Activated CD4-positive, alpha-beta T cell treated with anti-CD3 and anti-CD28 coated beads for 36 hours (primary cell): ENCODE measurements at regions of chr1 and their contacts with region 1.

Region 1: GRCh38 chr1:20493839-20494608 is 8.0 kb upstream of the CAMK2N1 start:
- DNase-seq: peak; percentile 88
- ATAC-seq: peak; percentile 31
- H3K4me3 Mint-ChIP-seq: no peak overlapping the region
- H3K27ac Mint-ChIP-seq: no peak overlapping the region
- H3K4me1 Mint-ChIP-seq: no peaks in the 10 kb centered on the region
- H3K27me3 Mint-ChIP-seq: peaks cover 10% of the 10 kb centered on the region

Region 2: GRCh38 chr1:20100632-20101355 is 393.2 kb before region 1 on chr1:
- CTCF ChIA-PET with region 1: no interaction called
- POLR2A ChIA-PET with region 1: no interaction called
- intact Hi-C with region 1: loop called in 1 of 2 experiments (anchors 2 kb)
- DNase-seq: peak; percentile 59
- ATAC-seq: peak; percentile 75
- H3K4me3 Mint-ChIP-seq: no peak overlapping the region
- H3K27ac Mint-ChIP-seq: no peak overlapping the region
- H3K4me1 Mint-ChIP-seq: peaks cover 5% of the 10 kb centered on the region
- H3K27me3 Mint-ChIP-seq: peaks cover 2% of the 10 kb centered on the region

Region 3: DNA sequence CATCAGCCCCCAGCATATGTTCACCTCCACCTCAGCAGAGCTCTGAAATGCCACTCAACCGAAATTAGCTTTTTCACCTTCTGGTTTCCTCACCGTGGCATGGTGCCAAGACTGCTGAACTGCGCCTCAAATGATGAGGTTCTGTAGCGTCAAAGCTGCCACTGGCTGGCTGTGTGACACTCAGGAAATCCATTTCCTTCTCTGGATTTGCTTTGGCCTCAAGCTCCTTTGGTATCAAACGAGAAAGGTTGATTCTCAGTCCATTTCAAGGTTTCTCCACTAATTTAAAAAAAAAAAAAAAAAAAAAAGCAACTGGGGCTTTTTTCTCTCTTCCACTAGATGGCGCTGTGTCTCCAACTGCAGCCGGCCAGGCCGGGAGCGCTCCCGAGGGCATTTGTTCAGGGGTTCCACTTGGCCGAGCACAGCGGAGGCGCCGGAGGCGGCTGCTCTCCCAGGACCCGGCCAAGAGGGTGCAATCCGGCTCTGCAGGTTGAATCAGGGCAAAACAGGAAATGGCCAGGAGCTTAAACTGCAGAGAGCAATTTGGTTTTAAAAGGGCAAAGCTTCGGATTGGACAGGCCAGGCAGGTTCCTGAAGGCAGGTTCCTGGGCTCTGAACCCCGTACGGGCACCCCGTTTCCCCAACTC is 281.2 kb before region 1 on chr1:
- CTCF ChIA-PET with region 1: interaction called, 51 read pairs
- POLR2A ChIA-PET with region 1: no interaction called
- intact Hi-C with region 1: loop called (anchors 1 kb)
- DNase-seq: peak; percentile 74
- ATAC-seq: peak; percentile 61
- H3K4me3 Mint-ChIP-seq: no peak overlapping the region
- H3K27ac Mint-ChIP-seq: no peak overlapping the region
- H3K4me1 Mint-ChIP-seq: peaks cover 8% of the 10 kb centered on the region
- H3K27me3 Mint-ChIP-seq: peaks cover 46% of the 10 kb centered on the region

Region 4: DNA sequence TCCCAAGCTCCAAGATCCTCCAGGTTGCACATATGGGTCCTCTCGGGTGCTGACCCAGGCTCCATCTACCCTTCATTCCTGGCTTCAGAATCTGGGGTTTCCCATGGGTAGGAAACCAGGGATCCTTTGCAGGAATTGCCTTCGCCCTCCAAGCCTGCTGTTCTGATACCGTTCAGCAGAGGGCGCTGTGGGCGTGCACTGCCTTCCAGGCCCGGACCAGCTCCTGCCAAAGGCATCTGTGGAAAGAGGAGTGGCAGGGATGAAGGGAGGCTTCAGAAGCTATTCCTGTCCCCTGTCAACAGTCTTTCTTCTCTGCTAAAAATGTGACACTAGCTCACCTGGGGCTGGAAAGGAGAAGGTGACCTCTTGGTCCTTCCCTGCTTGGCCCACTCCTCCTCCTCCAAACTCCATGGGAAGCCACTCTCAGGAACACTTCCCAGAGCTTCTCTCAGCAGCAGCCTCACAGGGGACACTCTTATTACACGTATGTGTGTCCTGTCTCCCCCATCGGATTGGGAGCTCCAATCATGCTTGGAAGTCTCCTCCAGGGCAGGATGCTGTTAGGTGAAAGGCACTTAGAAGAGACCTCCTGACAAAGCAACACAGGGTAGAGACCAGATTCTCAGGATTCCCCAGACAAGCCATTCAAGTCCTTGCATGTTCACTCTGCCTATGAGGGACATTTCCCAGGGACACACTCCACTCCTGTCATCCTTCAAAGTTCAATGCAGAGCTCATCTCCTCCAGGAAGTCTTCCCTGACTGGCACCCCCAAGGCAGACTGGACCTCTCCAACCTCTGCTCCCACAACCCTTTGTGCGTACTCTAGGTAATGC is 132.0 kb before region 1 on chr1:
- CTCF ChIA-PET with region 1: interaction called, 12 read pairs
- POLR2A ChIA-PET with region 1: no interaction called
- intact Hi-C with region 1: loop called (anchors 5 kb)
- DNase-seq: peak; percentile 63
- ATAC-seq: no peak
- H3K4me3 Mint-ChIP-seq: no peak overlapping the region
- H3K27ac Mint-ChIP-seq: no peak overlapping the region
- H3K4me1 Mint-ChIP-seq: peaks cover 20% of the 10 kb centered on the region
- H3K27me3 Mint-ChIP-seq: peaks cover 72% of the 10 kb centered on the region

Region 5: GRCh38 chr1:20430355-20431175 is 63.5 kb before region 1 on chr1:
- CTCF ChIA-PET with region 1: interaction called, 4 read pairs
- POLR2A ChIA-PET with region 1: no interaction called
- intact Hi-C with region 1: loop called (anchors 5 kb)
- DNase-seq: peak; percentile 73
- ATAC-seq: no peak
- H3K4me3 Mint-ChIP-seq: no peak overlapping the region
- H3K27ac Mint-ChIP-seq: no peak overlapping the region
- H3K4me1 Mint-ChIP-seq: peaks cover 13% of the 10 kb centered on the region
- H3K27me3 Mint-ChIP-seq: peaks cover 36% of the 10 kb centered on the region